ENCODE measurements at regions of chr14 and their contacts with region 1.

Region 1: DNA sequence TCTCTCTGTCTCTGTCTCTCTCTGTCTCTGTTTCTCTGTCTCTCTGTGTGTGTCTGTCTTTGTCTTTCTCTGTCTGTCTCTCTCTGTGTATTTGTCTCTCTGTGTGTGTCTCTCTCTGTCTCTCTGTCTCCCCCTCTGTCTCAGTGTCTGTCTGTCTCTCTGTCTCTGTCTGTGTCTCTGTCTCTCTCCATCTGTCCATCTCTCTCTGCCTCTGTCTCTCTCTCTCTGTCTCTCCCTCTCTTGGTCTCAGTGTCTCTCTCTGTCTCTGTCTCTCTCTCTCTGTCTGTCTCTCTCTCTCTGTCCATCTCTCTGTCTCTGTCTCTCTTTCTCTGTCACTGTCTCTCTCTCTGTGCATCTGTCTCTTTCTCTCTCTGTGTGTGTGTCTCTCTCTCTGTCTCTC is 143.8 kb upstream of the GARIN2 start:
- DNase-seq: no peak

Region 2: DNA sequence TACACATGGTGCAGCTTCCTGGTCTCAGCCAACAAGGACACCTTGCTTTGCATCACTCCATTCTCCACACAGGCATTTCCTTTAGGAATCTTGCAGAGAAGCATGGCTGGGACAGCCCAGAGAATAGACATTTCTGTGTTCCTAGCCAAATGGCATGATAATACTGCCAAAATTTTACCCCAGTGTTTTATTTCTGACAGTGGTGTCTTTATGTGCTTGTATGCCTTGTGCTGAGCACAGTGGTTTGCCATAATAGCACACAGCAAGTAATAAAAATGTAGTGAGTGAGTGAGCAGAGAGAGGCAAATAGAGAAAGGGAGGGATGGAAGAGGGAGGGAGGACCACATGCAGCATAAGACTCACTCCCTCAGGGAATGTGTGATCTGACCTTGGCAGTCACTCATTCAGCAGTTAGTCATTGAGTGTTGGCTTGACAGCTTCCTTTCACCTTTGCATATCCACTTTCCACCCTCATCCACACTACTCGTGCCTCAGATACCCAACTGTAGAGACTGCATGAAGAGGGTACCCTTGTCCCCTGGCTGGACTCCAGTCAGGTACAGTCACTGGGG is 772.1 kb before region 1 on chr14:
- intact Hi-C with region 1: loop called in 1 of 2 experiments (anchors 10 kb)
- DNase-seq: no peak

Region 3: DNA sequence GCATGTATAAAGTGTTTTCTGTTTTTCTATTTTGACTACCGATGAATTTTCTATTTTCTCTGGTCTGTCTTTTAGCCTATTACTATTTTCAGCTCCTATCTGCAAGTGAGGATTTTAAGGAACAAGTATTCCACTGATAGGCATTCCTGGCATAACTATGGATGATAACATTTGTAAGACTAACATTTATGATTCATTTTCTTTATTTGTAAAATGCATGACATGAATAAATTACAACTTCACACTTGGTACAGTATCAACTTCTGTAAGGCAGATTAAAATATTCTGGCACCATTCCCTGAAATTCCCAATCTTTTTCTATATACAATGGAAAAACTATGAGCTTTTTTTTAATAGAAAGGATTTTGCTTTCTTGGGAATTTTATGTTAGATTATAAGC is 22.8 kb after region 1 on chr14:
- intact Hi-C with region 1: no loop called
- DNase-seq: no peak

Measured in posterior vena cava (tissue), 2 donors.